ENCODE measurements at regions of chr16 and their contacts with region 1.

Region 1: GRCh38 chr16:66740010-66740409 is 11.4 kb downstream of the DYNC1LI2 start:
- DNase-seq: no peak
- H3K4me3 ChIP-seq: no peak overlapping the region
- H3K27ac ChIP-seq: no peak overlapping the region
- H3K4me1 ChIP-seq: peaks cover 0 to 8% (median 5%) of the 10 kb centered on the region in 4 experiments; a peak in 3 of 7 replicates
- H3K27me3 ChIP-seq: no peaks in the 10 kb centered on the region
- CTCF ChIP-seq: peak; percentile 29 to 60 (median 47); a peak in 3 of 4 replicates
- EP300 ChIP-seq: no peak
- POLR2A ChIP-seq: no peak
- RAD21 ChIP-seq: peak; percentile 12 to 25; a peak in 1 of 4 replicates

Region 2: GRCh38 chr16:66660422-66661209 is 79.4 kb before region 1 on chr16:
- CTCF ChIA-PET with region 1: interaction called, 21 read pairs
- POLR2A ChIA-PET with region 1: no interaction called
- DNase-seq: no peak
- H3K4me3 ChIP-seq: no peak overlapping the region
- H3K27ac ChIP-seq: no peak overlapping the region
- H3K4me1 ChIP-seq: no peaks in the 10 kb centered on the region
- H3K27me3 ChIP-seq: no peaks in the 10 kb centered on the region
- CTCF ChIP-seq: no peak
- EP300 ChIP-seq: no peak
- POLR2A ChIP-seq: no peak
- RAD21 ChIP-seq: no peak

Region 3: DNA sequence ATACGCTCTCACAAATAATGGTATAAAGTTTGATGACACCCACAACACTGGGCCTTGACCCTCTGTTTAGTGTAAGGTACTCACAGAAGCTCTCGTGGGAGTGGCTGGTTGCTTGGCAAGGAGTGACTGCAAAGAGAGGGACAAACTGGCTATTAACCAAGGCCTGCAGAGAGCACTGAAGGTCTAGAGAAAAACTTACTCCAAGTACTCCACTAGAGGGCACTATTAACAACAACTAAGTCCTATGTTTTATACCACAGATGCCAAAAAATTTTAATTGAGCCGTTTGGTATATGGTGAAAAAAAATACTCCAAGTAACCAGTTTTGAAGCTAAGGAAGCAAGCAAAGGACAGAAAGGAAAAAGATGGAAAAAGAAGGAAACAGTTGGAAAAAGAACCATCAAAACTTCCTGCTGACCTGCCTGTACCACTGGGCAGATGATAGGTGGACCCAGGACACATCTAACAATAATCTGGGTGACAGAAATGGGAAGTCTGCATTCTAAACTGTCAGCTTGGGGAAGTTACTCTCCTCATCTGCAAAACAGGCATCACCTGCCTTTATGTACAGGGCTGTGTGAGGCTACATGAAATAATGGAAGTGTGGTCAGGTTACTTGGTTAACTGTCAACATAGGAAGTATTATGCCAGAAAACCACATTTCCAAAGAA is 11.8 kb before region 1 on chr16:
- CTCF ChIA-PET with region 1: interaction called, 170 read pairs
- POLR2A ChIA-PET with region 1: interaction called, 57 read pairs
- DNase-seq: no peak
- H3K4me3 ChIP-seq: no peak overlapping the region
- H3K27ac ChIP-seq: no peak overlapping the region; the same call in 1 of the 2 replicates
- H3K4me1 ChIP-seq: peaks cover 0 to 6% (median 5%) of the 10 kb centered on the region in 4 experiments; a peak in 6 of 7 replicates
- H3K27me3 ChIP-seq: no peaks in the 10 kb centered on the region
- CTCF ChIP-seq: peak in 2 of 3 experiments; percentile 52 to 58; a peak in 3 of 4 replicates
- EP300 ChIP-seq: no peak
- POLR2A ChIP-seq: no peak
- RAD21 ChIP-seq: peak; percentile 37 to 50

Region 4: GRCh38 chr16:66751303-66751991 is 11.4 kb after region 1 on chr16 and contains the start of gene DYNC1LI2:
- CTCF ChIA-PET with region 1: interaction called, 15 read pairs
- POLR2A ChIA-PET with region 1: interaction called, 52 read pairs
- DNase-seq: peak in 1 of 2 experiments; percentile 92
- H3K4me3 ChIP-seq: peak within 1 kb of the TSS; percentile 74 to 98 (median 95)
- H3K27ac ChIP-seq: peak within 1 kb of the TSS; percentile 99
- H3K4me1 ChIP-seq: peaks cover 3 to 9% (median 6%) of the 10 kb centered on the region in 4 experiments; a peak in 6 of 7 replicates
- H3K27me3 ChIP-seq: peaks cover 0 to 2% (median 0%) of the 10 kb centered on the region in 4 experiments; a peak in 1 of 7 replicates
- CTCF ChIP-seq: peak; percentile 71 to 96 (median 74)
- EP300 ChIP-seq: no peak
- POLR2A ChIP-seq: peak; percentile 63 to 71
- RAD21 ChIP-seq: peak; percentile 11 to 43; a peak in 2 of 4 replicates
- total RNA-seq, gene DYNC1LI2: 70.8 and 72.4 TPM in 2 replicates

Measured in H1 (cell line).